ENCODE measurements at regions of chr20 and their contacts with region 1.

Region 1: DNA sequence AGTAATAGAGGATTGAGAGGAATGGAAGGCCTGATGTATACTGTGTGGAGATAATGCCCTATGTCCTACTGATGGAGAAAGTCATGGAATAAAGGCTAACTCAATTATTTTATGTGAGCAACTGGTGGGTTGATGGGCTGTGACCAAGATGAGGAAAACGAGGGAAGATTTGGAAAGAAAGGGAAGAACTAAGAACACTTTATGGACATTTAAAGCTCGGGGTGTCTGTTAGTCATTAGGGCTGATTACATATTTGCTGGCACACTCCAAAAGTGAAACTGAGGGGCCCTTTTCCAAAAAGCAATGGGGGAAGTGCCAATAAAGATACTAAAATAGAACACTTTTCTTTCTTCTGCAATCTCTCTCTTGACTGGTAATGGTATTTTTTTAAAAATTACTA is 439.5 kb downstream of the PLCB1 start:
- DNase-seq: no peak
- ATAC-seq: no peak
- H3K4me3 ChIP-seq: no peak overlapping the region
- H3K27ac ChIP-seq: no peak overlapping the region
- H3K4me1 ChIP-seq: no peaks in the 10 kb centered on the region
- H3K27me3 ChIP-seq: no peaks in the 10 kb centered on the region
- CTCF ChIP-seq: no peak
- EP300 ChIP-seq: no peak
- POLR2A ChIP-seq: no peak
- RAD21 ChIP-seq: no peak

Region 2: DNA sequence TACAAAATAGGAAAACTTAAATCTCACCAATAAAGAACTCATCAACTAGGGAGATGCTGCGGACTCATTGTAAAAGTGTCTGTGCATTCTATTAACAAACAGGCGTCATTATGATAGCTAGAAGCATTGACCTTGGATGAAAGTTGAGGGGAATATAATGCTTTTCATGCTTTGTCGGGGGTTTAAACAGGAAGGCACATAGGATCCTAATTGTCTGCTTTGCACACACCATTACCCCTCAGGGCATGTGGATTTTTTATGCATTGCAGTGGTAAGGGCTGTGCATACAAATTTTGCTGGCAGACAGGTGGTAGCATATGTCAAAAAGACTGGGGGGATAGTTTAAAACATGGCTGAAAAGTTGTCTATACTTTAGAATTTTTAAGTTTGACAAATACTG is 49.4 kb after region 1 on chr20:
- CTCF ChIA-PET with region 1: no interaction called
- POLR2A ChIA-PET with region 1: no interaction called
- RAD21 ChIA-PET with region 1: no interaction called
- SMC1A ChIA-PET with region 1: no interaction called
- in situ Hi-C with region 1: loop called (anchors 5 kb)
- intact Hi-C with region 1: no loop called
- DNase-seq: no peak
- ATAC-seq: no peak
- H3K4me3 ChIP-seq: no peak overlapping the region
- H3K27ac ChIP-seq: no peak overlapping the region
- H3K4me1 ChIP-seq: no peaks in the 10 kb centered on the region
- H3K27me3 ChIP-seq: no peaks in the 10 kb centered on the region
- CTCF ChIP-seq: no peak
- EP300 ChIP-seq: no peak
- POLR2A ChIP-seq: no peak
- RAD21 ChIP-seq: no peak

Region 3: DNA sequence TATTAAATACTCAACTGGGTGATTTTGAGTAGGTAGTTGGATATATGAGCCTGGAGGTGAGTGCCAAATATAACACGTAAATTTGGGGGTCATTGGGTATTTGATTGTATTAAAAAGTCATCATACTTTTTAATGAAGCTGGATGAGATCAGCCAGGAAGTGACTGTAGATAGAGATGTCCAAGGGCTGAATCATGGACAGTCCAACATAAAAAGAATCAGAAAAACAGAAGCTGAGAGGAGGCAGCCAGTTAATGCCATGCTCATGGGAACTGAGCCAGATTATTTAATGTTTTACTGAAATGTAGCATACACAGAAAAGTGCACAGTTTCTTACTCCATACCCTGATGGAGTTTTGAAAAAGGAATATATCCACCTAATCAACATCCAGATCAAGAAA is 61.8 kb after region 1 on chr20:
- CTCF ChIA-PET with region 1: no interaction called
- POLR2A ChIA-PET with region 1: no interaction called
- RAD21 ChIA-PET with region 1: no interaction called
- SMC1A ChIA-PET with region 1: no interaction called
- in situ Hi-C with region 1: no loop called
- intact Hi-C with region 1: no loop called
- DNase-seq: no peak
- ATAC-seq: no peak
- H3K4me3 ChIP-seq: no peak overlapping the region
- H3K27ac ChIP-seq: no peak overlapping the region
- H3K4me1 ChIP-seq: no peaks in the 10 kb centered on the region
- H3K27me3 ChIP-seq: no peaks in the 10 kb centered on the region
- CTCF ChIP-seq: no peak
- EP300 ChIP-seq: no peak
- POLR2A ChIP-seq: no peak
- RAD21 ChIP-seq: no peak

Measured in GM12878 (cell line).